Ovary (tissue), 10 donors: ENCODE measurements at regions of chr2 and their contacts with region 1.

Region 1: DNA sequence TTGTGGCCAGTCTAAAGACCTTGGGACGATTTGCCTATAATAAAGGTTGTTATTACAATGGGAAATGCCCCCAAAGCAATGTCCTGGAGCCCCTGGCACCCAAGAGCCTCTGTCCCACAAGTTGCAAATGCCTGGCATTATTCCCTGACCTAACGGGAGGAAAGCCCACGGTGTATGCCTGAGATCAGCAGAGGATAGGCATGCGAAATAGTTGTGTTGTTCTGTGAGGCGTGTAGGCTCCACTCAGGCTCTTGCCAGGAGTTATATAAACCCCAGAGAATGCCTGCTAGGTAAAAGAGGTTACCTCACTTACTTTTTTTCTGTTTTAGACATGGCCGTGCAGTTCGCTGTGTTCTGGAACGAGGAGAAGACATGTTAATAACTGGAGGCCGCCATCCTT is 52.1 kb downstream of the AOX1 start:
- DNase-seq: no peak
- H3K4me3 ChIP-seq: no peak overlapping the region
- H3K27ac ChIP-seq: no peak overlapping the region
- H3K4me1 ChIP-seq: no peaks in the 10 kb centered on the region
- H3K27me3 ChIP-seq: no peaks in the 10 kb centered on the region
- CTCF ChIP-seq: no peak
- EP300 ChIP-seq: no peak
- POLR2A ChIP-seq: no peak

Region 2: GRCh38 chr2:200498402-200499162 is 139.3 kb before region 1 on chr2:
- intact Hi-C with region 1: no loop called
- DNase-seq: no peak
- H3K4me3 ChIP-seq: no peak overlapping the region
- H3K27ac ChIP-seq: no peak overlapping the region
- H3K4me1 ChIP-seq: no peaks in the 10 kb centered on the region
- H3K27me3 ChIP-seq: no peaks in the 10 kb centered on the region
- CTCF ChIP-seq: no peak
- EP300 ChIP-seq: no peak
- POLR2A ChIP-seq: no peak

Region 3: GRCh38 chr2:200681697-200682096 is 43.8 kb after region 1 on chr2:
- intact Hi-C with region 1: loop called in 1 of 4 experiments (anchors 2 kb)
- DNase-seq: no peak
- H3K4me3 ChIP-seq: no peak overlapping the region
- H3K27ac ChIP-seq: no peak overlapping the region
- H3K4me1 ChIP-seq: peaks cover 2% of the 10 kb centered on the region
- H3K27me3 ChIP-seq: no peaks in the 10 kb centered on the region
- CTCF ChIP-seq: no peak
- EP300 ChIP-seq: no peak
- POLR2A ChIP-seq: no peak

Region 4: DNA sequence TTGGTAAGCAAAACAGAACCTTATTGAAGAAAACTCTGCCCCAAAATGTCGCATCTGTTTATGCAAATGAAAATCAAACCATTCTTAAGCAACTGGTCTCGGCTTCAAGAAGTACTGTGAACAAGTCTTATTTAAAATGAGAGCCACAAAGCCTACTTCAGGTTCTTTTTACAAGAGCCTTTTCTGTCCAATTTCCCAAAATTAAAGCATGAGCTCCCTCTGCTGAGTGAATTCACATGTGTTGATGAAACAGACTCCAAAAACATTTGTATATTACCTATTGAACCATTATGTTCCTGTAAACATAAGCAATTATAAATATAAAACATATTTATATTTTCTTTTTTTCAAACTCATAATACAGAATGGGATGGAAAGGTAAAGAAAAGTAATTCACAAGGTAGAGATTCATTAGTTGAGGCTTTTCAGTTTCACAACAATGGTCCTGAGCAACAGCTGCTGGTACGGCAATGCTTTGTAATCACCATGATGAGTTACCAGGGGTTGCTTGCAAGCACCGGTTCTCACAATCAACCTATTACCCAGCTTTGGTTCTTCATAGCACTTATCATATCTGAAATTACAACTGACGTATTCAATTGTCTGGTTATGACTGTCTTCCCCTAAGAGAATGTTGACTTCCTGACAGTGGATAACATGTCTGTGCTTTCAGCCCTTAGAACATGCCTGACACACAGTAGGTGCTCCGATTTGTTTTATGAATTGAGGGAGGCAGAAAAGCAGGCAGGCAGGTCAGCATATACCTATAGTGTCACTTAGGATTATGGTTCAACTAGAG is 65.4 kb after region 1 on chr2:
- intact Hi-C with region 1: no loop called
- DNase-seq: peak in 2 of 5 donors; percentile 19 to 55
- H3K4me3 ChIP-seq: no peak overlapping the region
- H3K27ac ChIP-seq: no peak overlapping the region
- H3K4me1 ChIP-seq: peaks cover 3% of the 10 kb centered on the region
- H3K27me3 ChIP-seq: no peaks in the 10 kb centered on the region
- CTCF ChIP-seq: peak; percentile 36 to 77 (median 65)
- EP300 ChIP-seq: no peak
- POLR2A ChIP-seq: no peak